Colonic mucosa (tissue), 4 donors: ENCODE measurements at regions of chr2 and their contacts with region 1.

Region 1: GRCh38 chr2:102240640-102241370 is 54.0 kb downstream of the IL1RL2 start:
- DNase-seq: peak; percentile 92
- H3K4me3 ChIP-seq: no peak overlapping the region
- H3K27ac ChIP-seq: peak overlapping the region; percentile 65
- H3K4me1 ChIP-seq: peaks cover 7% of the 10 kb centered on the region
- H3K27me3 ChIP-seq: no peaks in the 10 kb centered on the region
- CTCF ChIP-seq: peak; percentile 98

Region 2: GRCh38 chr2:101057051-101057933 is 1183.5 kb before region 1 on chr2:
- intact Hi-C with region 1: no loop called
- DNase-seq: no peak
- H3K4me3 ChIP-seq: no peak overlapping the region
- H3K27ac ChIP-seq: no peak overlapping the region
- H3K4me1 ChIP-seq: no peaks in the 10 kb centered on the region
- H3K27me3 ChIP-seq: no peaks in the 10 kb centered on the region
- CTCF ChIP-seq: no peak

Region 3: DNA sequence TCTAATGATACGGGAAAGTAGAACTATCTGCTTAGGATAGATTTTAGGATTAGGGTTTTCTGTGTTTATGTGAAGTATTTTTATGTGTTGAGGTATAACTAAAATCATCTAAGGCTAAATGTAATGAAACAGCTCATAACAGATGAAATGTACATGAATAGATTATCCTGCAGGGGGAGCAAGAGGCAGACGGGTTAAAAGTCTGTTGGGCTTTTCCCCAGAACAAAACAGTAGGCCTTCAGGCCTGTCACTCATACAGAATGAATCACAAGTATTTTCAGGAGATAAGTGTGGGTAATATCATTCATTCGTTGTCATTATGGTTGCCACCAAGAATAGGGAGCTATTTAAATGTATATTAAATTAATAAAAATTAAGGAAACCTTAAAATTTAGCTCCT is 356.9 kb before region 1 on chr2:
- intact Hi-C with region 1: loop called (anchors 5 kb)
- DNase-seq: peak; percentile 50
- H3K4me3 ChIP-seq: no peak overlapping the region
- H3K27ac ChIP-seq: no peak overlapping the region
- H3K4me1 ChIP-seq: no peaks in the 10 kb centered on the region
- H3K27me3 ChIP-seq: no peaks in the 10 kb centered on the region
- CTCF ChIP-seq: peak; percentile 50

Region 4: DNA sequence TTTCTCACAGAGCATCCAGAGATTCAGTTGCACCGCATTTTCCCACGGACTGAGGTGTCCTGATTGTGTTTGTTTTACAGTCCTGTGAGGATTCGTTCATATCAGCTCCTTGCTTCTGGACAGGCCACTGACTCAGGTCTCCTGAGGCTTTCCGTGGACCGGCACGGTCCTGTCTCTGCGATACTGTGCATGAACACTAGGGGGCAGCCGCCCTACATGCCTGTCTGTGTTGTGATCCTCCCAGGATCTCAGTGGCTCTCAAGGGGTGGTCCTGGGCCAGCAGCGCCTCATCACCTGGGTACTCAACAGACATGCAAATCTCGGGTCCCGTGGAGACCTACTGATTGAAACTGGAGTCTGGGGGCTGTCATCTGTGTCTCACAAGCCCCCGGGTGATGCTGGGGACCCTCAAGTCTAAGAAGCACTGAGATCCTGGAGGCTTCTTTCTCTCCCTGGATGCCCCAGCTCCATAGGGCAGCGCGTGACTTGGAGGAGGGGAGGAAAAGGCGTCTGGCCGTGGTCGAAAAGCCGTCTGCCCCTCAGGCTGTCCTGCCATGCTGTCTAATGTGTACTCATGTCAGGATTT is 220.1 kb before region 1 on chr2:
- intact Hi-C with region 1: loop called (anchors 2 kb)
- DNase-seq: peak; percentile 89
- H3K4me3 ChIP-seq: no peak overlapping the region
- H3K27ac ChIP-seq: peak overlapping the region; percentile 1
- H3K4me1 ChIP-seq: no peaks in the 10 kb centered on the region
- H3K27me3 ChIP-seq: no peaks in the 10 kb centered on the region
- CTCF ChIP-seq: peak; percentile 98

Region 5: DNA sequence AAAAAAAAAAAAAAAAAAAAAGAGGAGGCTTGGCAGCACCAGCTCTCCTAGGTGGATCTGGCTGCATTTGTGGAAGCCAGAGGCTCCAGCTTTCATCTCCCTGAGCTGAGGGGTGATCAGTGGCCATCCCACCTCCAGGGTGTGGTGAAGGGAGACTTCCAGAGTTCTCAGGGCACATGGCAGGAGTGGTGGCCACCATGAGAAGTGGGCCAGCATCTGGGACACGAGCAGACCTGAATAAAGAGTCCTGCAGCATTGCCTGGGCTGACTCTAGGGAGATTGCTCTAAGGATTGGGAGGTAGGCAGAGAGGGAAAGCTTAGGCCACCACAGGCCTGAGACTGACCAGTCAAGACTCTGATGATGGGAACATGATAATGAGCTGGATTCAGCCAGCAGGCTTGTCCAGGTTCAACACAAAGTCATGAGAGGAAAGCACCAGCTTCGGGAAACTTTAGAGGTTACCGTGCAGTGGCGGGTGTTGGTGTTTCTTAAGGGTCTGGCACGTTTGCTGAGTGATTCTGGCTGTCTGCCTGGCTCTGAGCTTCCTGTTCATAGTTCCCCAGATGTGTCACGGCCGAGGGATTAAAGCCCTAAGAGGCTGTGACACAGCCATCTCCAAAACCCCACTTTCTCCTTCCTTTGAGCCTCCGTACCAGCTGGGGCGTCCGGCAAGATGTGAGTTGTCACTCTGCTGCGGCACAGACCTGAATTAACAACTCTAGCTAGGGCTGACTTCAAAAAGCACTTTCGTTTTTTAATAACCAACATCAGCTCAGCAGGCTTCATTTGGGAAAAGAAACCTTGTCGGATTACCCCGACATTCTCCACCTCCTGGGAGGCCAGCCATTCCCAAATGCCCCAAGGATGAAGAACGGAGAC is 136.6 kb before region 1 on chr2:
- intact Hi-C with region 1: no loop called
- DNase-seq: peak; percentile 66
- H3K4me3 ChIP-seq: no peak overlapping the region
- H3K27ac ChIP-seq: peak overlapping the region; percentile 24
- H3K4me1 ChIP-seq: no peaks in the 10 kb centered on the region
- H3K27me3 ChIP-seq: no peaks in the 10 kb centered on the region
- CTCF ChIP-seq: no peak

Region 6: GRCh38 chr2:102187496-102188150 is 53.2 kb before region 1 on chr2:
- intact Hi-C with region 1: loop called (anchors 5 kb)
- DNase-seq: peak; percentile 60
- H3K4me3 ChIP-seq: peak overlapping the region; percentile 48
- H3K27ac ChIP-seq: peak overlapping the region; percentile 27
- H3K4me1 ChIP-seq: no peaks in the 10 kb centered on the region
- H3K27me3 ChIP-seq: no peaks in the 10 kb centered on the region
- CTCF ChIP-seq: no peak

Region 7: GRCh38 chr2:102436323-102436722 is 195.5 kb after region 1 on chr2:
- intact Hi-C with region 1: loop called (anchors 5 kb)
- DNase-seq: no peak
- H3K4me3 ChIP-seq: no peak overlapping the region
- H3K27ac ChIP-seq: no peak overlapping the region
- H3K4me1 ChIP-seq: no peaks in the 10 kb centered on the region
- H3K27me3 ChIP-seq: no peaks in the 10 kb centered on the region
- CTCF ChIP-seq: no peak

Region 8: DNA sequence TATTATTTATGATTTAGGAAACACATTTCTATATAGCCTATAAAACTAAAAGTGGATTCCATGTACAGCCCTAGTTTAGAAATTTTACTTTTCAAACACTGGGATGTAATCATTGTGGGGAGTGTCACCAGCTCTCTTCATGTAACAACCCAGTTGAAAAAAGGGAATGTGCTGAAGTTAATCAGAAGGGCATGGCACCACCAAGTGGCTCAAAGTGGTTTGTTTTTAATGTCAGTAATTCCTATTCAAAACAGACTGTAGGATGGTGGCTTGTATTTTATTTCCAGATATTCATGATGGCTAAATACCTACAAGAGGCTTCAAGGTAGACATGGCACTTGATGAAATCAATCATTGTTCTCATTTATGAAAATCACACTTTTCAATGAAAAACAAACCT is 462.9 kb after region 1 on chr2:
- intact Hi-C with region 1: no loop called
- DNase-seq: no peak
- H3K4me3 ChIP-seq: no peak overlapping the region
- H3K27ac ChIP-seq: no peak overlapping the region
- H3K4me1 ChIP-seq: no peaks in the 10 kb centered on the region
- H3K27me3 ChIP-seq: no peaks in the 10 kb centered on the region
- CTCF ChIP-seq: peak; percentile 19